Caco-2 (cell line): ENCODE measurements at regions of chr7 and their contacts with region 1.

Region 1: DNA sequence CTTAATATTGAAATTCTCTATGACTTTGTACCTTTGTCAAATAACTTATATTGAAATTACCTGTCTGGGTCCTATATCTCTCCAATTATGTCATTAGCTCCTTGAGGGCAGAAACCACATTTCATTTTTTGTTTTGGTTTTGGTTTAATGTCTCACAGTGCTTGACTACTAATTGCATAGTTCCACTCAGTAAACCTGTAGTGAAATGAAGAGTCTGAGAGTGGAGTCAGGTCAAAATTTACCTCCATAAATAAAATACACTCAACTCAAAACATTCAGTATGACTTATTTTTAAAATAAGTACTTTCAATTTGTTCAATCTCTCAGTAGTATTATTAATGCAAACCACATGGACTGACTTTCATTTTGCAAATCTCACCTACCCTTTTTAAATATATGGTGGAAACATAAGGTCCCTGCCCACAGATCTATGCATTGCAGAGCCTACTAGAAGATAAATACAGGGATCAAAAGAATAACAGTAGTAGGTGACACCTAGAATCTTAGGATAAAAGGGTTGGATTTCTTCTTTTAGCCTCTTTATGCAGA is 32.5 kb downstream of the PDE1C start:
- DNase-seq: no peak
- H3K4me3 ChIP-seq: no peak overlapping the region
- H3K4me3 Mint-ChIP-seq: no peak overlapping the region
- H3K27ac Mint-ChIP-seq: no peak overlapping the region
- H3K4me1 ChIP-seq: peaks cover 6% of the 10 kb centered on the region
- H3K4me1 Mint-ChIP-seq: no peaks in the 10 kb centered on the region
- H3K27me3 ChIP-seq: no peaks in the 10 kb centered on the region; the same call in 1 of the 2 replicates
- H3K27me3 Mint-ChIP-seq: peaks cover 5% of the 10 kb centered on the region
- CTCF ChIP-seq: no peak

Region 2: DNA sequence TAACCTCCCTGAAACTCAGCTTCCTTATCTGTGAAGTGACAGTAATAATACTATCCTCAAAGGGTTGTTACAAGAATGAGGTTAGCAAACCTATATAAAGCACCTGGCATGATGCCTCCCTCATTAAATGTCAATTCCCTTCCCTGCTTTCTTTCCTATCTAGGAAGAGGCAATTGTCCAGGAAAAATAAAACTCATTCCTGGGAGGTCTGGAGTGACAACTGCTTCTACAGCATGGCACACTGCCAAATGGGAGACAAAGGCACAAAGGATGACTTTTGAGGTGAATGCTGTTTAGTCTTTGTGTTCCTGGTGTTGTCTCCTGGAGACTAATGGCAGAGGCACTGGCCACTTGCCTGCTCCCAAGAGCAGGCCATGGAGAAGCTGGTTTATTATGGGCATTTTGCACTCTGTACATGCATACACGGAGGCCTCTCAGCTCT is 64.7 kb after region 1 on chr7:
- CTCF ChIA-PET with region 1: no interaction called
- POLR2A ChIA-PET with region 1: no interaction called
- intact Hi-C with region 1: no loop called
- DNase-seq: no peak
- H3K4me3 ChIP-seq: no peak overlapping the region
- H3K4me3 Mint-ChIP-seq: no peak overlapping the region
- H3K27ac Mint-ChIP-seq: no peak overlapping the region
- H3K4me1 ChIP-seq: no peaks in the 10 kb centered on the region
- H3K4me1 Mint-ChIP-seq: no peaks in the 10 kb centered on the region
- H3K27me3 ChIP-seq: no peaks in the 10 kb centered on the region
- H3K27me3 Mint-ChIP-seq: peaks cover 10% of the 10 kb centered on the region
- CTCF ChIP-seq: no peak

Region 3: DNA sequence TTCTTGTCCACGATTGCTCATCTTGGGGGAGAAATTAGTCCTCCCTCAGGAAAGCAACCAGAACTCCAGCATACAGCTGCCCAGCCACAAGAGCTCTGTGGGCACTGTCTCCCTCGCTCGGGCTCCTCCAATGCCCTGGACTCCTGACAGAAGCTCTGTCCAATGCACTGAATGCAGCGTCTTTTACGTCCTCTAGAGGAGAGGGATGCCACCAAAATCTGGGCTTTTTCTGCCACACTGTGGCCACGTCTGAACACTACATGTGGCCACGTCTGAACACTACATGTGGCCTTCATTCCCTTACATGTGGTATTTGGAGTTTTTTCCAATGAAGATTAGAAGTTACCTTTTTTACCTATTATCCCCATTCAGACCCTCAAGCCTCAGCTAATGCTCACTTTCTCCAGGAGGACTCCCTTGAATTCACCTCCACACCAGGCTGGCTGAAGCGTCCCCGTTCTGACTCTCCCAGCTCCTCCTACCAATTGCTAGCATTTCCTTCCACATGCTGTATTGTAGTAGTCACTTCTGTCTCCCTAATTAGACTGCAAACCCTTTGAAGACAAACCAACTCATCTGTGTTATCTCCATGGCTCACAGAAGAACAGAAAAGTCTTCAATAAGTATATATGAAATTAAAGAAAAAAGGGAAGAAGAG is 166.8 kb after region 1 on chr7:
- CTCF ChIA-PET with region 1: no interaction called
- POLR2A ChIA-PET with region 1: no interaction called
- intact Hi-C with region 1: loop called (anchors 1 kb)
- DNase-seq: peak; percentile 62 to 67
- H3K4me3 ChIP-seq: no peak overlapping the region
- H3K4me3 Mint-ChIP-seq: no peak overlapping the region
- H3K27ac Mint-ChIP-seq: no peak overlapping the region
- H3K4me1 ChIP-seq: no peaks in the 10 kb centered on the region
- H3K4me1 Mint-ChIP-seq: no peaks in the 10 kb centered on the region
- H3K27me3 ChIP-seq: no peaks in the 10 kb centered on the region
- H3K27me3 Mint-ChIP-seq: peaks cover 29% of the 10 kb centered on the region
- CTCF ChIP-seq: peak; percentile 77 to 84